BJ (cell line): ENCODE measurements at regions of chr14 and their contacts with region 1.

Region 1: DNA sequence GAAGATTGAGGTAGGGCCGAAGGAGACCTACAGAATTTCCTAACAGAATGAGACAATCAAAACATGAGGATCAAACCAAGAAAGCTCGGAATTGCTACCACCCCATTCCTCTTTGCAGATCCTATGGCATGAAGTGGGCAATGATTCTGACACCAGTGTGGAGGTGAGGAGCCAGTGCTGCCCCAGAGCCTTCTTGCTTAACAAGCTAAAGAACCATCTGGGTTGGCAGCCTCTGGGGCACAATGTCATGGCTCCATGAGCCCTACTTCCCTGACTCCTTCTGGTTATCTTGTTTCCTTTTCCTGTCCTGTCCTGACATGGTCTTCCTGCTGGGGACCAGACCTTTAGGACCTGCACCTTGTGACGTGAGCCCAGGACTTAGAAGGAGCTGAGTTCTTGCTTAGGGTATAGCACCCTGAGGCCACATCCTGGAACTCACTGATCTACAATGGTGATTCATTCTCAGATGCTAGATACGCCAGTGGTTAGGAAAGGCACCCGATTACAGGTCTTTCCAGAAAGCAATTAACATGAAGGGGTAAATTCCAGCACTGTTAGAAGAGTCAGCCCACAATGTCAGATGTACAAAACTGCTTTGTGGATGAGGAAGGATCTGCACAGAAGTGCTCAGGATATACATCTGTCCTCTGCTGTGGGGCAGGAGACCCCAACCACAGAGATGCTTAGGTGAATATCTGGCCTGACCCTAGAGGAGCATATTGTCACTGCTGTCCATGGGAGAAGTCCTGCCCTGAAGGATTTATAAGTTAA is 324.2 kb downstream of the ZFP36L1 start:
- DNase-seq: peak; percentile 52
- H3K4me3 ChIP-seq: no peak overlapping the region
- H3K27me3 ChIP-seq: no peaks in the 10 kb centered on the region
- CTCF ChIP-seq: no peak

Region 2: GRCh38 chr14:68199554-68200151 is 269.0 kb before region 1 on chr14:
- CTCF ChIA-PET with region 1: no interaction called
- POLR2A ChIA-PET with region 1: no interaction called
- DNase-seq: no peak
- H3K4me3 ChIP-seq: no peak overlapping the region
- H3K27me3 ChIP-seq: no peaks in the 10 kb centered on the region
- CTCF ChIP-seq: no peak

Region 3: DNA sequence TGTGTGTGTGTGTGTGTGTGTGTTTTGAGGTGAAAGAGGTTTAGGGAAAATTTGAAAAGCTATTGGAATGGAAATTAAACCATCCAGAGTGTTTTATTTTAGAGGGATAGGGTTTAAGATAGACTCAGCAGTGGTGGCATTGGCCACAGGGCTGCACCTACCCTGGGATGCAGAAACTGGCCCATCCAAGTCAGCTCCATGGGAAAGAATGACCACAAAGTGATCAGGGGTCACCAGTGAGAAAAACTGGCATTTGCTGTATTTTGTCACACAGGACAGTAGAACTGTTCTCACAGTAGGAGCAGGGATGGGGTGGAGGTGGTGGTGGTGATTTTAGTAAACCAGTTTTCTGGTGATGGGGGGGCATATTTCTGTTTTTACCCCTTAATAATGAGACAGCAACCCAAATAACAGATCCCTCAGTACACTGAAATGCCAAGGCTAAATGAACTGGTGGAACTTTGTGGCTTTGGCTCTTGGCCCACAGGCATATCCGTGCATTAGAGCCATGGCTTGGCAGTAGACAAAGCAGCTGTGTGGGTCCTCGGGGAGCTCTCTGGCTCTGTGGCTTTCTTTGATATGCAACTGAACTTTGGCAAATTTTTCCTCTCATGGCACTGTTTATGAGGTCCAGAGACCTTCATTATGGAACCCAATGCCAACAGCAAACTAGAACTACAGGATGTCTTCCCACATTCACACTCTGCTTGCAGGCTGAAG is 24.0 kb before region 1 on chr14:
- CTCF ChIA-PET with region 1: interaction called, 3 read pairs
- POLR2A ChIA-PET with region 1: interaction called, 23 read pairs
- DNase-seq: no peak
- H3K4me3 ChIP-seq: no peak overlapping the region
- H3K27me3 ChIP-seq: no peaks in the 10 kb centered on the region
- CTCF ChIP-seq: no peak